T-cell (primary cell): ENCODE measurements at regions of chr12 and their contacts with region 1.

Region 1: GRCh38 chr12:47742253-47742825 is 16.3 kb downstream of the RAPGEF3 start:
- DNase-seq: peak in 31 of 35 experiments; percentile 26 to 81 (median 56)
- ATAC-seq: peak in 2 of 4 experiments; percentile 30 to 36
- H3K4me3 ChIP-seq: no peak overlapping the region
- H3K4me3 Mint-ChIP-seq: peak overlapping the region in 1 of 3 donors; percentile 42
- H3K27ac ChIP-seq: no peak overlapping the region
- H3K27ac Mint-ChIP-seq: peak overlapping the region in 1 of 2 donors; percentile 51
- H3K4me1 ChIP-seq: peaks cover 9 to 33% of the 10 kb centered on the region in 2 experiments
- H3K4me1 Mint-ChIP-seq: peaks cover 32 to 51% (median 39%) of the 10 kb centered on the region in 3 donors
- H3K27me3 ChIP-seq: peaks cover 0 to 35% of the 10 kb centered on the region in 2 experiments
- H3K27me3 Mint-ChIP-seq: no peaks in the 10 kb centered on the region

Region 2: DNA sequence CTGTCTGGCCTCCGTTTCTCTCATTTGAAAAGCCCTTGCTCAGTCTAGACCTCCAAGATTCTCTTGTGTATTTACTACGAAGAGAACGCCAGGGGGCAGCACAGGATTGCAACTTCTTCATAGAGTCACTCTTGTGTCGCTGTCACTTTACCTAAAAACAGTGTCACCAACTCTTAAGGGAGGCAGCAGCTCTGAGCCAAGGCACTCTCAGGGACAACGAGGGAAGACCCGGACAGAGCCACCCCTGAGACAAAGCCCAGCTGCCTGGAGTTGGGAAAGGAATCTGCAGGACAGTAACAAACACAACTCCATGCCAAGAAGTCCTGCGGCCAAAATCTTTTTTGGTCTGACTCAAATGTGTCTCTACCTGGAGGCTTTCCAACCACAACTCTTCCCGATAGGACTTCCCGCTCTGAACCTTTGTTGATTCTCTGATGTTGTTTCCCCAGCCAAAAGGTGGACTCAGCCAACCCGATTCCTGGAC is 26.9 kb before region 1 on chr12:
- CTCF ChIA-PET with region 1: interaction called, 7 to 16 read pairs
- POLR2A ChIA-PET with region 1: no interaction called
- DNase-seq: peak; percentile 54 to 92 (median 76)
- ATAC-seq: peak; percentile 74 to 88 (median 82)
- H3K4me3 ChIP-seq: no peak overlapping the region
- H3K4me3 Mint-ChIP-seq: peak overlapping the region in 1 of 3 donors; percentile 7
- H3K27ac ChIP-seq: no peak overlapping the region
- H3K27ac Mint-ChIP-seq: peak overlapping the region; percentile 57 to 69
- H3K4me1 ChIP-seq: peaks cover 7 to 20% of the 10 kb centered on the region in 2 experiments
- H3K4me1 Mint-ChIP-seq: peaks cover 24 to 31% (median 27%) of the 10 kb centered on the region in 3 donors
- H3K27me3 ChIP-seq: no peaks in the 10 kb centered on the region
- H3K27me3 Mint-ChIP-seq: no peaks in the 10 kb centered on the region

Region 3: DNA sequence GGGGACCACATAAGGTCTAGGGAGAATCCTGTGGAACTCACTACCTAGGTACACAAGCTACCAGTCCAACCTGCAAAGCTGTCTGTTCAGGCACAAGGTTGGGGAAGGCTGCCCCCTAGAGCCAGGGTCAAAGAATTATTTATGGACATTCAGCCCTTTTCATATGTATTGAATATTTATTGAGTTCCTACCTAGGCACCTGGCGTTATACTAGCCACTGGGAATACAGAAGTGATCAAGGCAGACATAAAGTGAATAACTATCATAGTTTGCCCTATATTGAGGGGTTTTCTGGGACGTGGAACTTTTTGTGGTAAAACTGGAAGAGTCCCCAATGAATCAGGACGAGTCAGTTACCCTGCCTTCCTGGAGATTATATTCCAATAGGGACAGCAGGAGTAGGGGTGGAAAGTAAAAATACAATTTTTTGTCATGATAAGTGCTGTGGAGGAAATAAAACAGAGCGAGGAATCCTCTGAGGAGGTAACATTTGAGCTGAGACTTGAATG is 24.9 kb after region 1 on chr12:
- CTCF ChIA-PET with region 1: interaction called, 69 to 95 read pairs
- POLR2A ChIA-PET with region 1: interaction called, 3 to 4 read pairs
- DNase-seq: peak; percentile 17 to 80 (median 58)
- ATAC-seq: peak; percentile 49 to 78 (median 72)
- H3K4me3 ChIP-seq: no peak overlapping the region
- H3K4me3 Mint-ChIP-seq: no peak overlapping the region
- H3K27ac ChIP-seq: no peak overlapping the region
- H3K27ac Mint-ChIP-seq: peak overlapping the region; percentile 32 to 34
- H3K4me1 ChIP-seq: peaks cover 0 to 15% of the 10 kb centered on the region in 2 experiments
- H3K4me1 Mint-ChIP-seq: peaks cover 2 to 19% (median 13%) of the 10 kb centered on the region in 3 donors
- H3K27me3 ChIP-seq: peaks cover 0 to 13% of the 10 kb centered on the region in 2 experiments
- H3K27me3 Mint-ChIP-seq: no peaks in the 10 kb centered on the region

Region 4: DNA sequence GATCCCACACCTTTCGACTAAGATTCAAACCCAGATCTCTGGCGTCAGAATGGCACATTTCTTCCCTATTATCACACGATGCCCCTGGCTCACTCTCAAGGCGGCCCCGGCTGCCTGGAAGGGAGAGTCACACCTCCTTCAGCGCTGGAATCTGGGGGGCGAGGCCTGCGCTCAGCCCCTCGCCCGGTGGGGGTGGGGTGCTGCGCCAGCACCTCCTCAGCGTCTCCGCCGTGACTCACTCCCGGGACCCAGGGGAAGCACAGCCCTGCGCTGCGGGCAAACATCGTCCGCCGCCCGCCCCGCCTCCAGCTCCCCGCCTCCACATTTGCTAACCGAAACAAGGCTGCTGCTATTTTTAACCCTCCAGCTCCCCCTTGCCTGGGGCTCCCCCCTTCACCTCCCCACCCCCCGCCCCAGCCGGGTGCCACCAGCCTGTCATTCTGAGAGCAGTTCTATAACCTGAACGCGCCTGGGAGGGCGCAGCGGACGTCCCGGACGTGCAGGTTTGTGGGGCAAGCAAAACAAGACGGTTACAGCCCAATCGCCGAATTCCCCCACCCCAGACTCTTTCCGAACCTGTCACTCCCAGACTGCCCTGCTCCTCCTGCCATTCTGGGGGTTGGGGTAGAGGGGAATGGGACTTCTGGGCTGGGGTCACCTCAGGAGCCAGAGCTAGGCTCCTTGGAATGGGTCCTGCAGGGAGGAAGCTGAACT is 70.6 kb after region 1 on chr12:
- CTCF ChIA-PET with region 1: interaction called, 5 to 14 read pairs
- POLR2A ChIA-PET with region 1: no interaction called
- DNase-seq: peak; percentile 77 to 94 (median 89)
- ATAC-seq: peak; percentile 77 to 79 (median 79)
- H3K4me3 ChIP-seq: peak overlapping the region; percentile 59 to 70
- H3K4me3 Mint-ChIP-seq: peak overlapping the region; percentile 73 to 97 (median 80)
- H3K27ac ChIP-seq: peak overlapping the region; percentile 95
- H3K27ac Mint-ChIP-seq: peak overlapping the region; percentile 90 to 99
- H3K4me1 ChIP-seq: peaks cover 71 to 99% of the 10 kb centered on the region in 2 experiments
- H3K4me1 Mint-ChIP-seq: peaks cover 91 to 97% (median 96%) of the 10 kb centered on the region in 3 donors
- H3K27me3 ChIP-seq: no peaks in the 10 kb centered on the region
- H3K27me3 Mint-ChIP-seq: no peaks in the 10 kb centered on the region

Region 5: GRCh38 chr12:47837190-47838171 is 95.1 kb after region 1 on chr12:
- CTCF ChIA-PET with region 1: interaction called, 67 to 78 read pairs
- POLR2A ChIA-PET with region 1: no interaction called
- DNase-seq: peak in 34 of 35 experiments; percentile 23 to 85 (median 58)
- ATAC-seq: peak; percentile 34 to 49 (median 36)
- H3K4me3 ChIP-seq: no peak overlapping the region
- H3K4me3 Mint-ChIP-seq: no peak overlapping the region
- H3K27ac ChIP-seq: no peak overlapping the region
- H3K27ac Mint-ChIP-seq: peak overlapping the region; percentile 5 to 57
- H3K4me1 ChIP-seq: peaks cover 36 to 44% of the 10 kb centered on the region in 2 experiments
- H3K4me1 Mint-ChIP-seq: peaks cover 56 to 61% (median 57%) of the 10 kb centered on the region in 3 donors
- H3K27me3 ChIP-seq: no peaks in the 10 kb centered on the region
- H3K27me3 Mint-ChIP-seq: no peaks in the 10 kb centered on the region